Dorsolateral prefrontal cortex (tissue), 120 donors: ENCODE measurements at regions of chr2 and their contacts with region 1.

Region 1: GRCh38 chr2:192123847-192124246 is 70.9 kb downstream of the TMEFF2 start:
- DNase-seq: peak in 3 of 10 donors; percentile 10 to 39 (median 39)
- H3K4me3 ChIP-seq: peak overlapping the region in 1 of 59 donors; percentile 18
- H3K27ac ChIP-seq: peak overlapping the region in 52 of 59 donors; percentile 3 to 83 (median 58)
- H3K27me3 ChIP-seq: no peaks in the 10 kb centered on the region
- CTCF ChIP-seq: no peak

Region 2: GRCh38 chr2:192016265-192016664 is 107.6 kb before region 1 on chr2:
- intact Hi-C with region 1: no loop called
- DNase-seq: no peak
- H3K4me3 ChIP-seq: no peak overlapping the region
- H3K27ac ChIP-seq: no peak overlapping the region
- H3K27me3 ChIP-seq: no peaks in the 10 kb centered on the region
- CTCF ChIP-seq: no peak

Region 3: DNA sequence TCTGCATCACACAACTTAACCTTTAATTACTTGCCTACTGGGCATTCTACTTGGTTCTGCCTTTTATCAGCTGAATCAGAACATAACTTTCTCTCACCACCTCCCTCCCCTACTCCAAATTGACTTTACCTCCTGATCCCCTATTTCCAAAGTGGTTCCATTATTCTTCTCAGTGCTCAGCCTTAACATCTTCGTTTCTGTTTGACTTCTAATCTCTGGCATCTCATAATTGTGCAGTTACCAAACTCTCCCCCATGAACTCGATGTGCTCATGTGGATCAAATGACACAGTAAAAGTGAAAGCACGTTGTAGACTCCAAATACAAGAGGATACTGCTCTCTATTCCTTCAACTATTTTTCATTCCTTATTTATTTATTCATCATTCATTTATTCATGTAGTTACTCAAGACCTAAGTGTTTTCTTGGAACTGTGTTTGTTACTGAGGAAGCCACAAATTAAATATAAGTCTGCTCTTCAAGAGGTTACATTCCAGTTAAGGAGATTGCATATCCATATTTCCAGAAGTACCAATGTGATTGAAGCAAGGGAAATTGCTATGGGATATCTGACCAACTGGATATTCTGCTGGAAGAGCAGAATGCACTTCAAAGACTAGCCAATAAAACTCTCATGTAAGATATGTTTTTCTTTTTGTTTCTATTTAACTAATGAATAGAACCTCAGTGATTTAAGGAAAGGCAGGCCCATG is 88.0 kb before region 1 on chr2:
- intact Hi-C with region 1: loop called in 1 of 2 experiments (anchors 10 kb)
- DNase-seq: no peak
- H3K4me3 ChIP-seq: no peak overlapping the region
- H3K27ac ChIP-seq: peak overlapping the region in 4 of 59 donors; percentile 5 to 25 (median 16)
- H3K27me3 ChIP-seq: no peaks in the 10 kb centered on the region
- CTCF ChIP-seq: no peak